ENCODE measurements at regions of chr16 and their contacts with region 1.

Region 1: DNA sequence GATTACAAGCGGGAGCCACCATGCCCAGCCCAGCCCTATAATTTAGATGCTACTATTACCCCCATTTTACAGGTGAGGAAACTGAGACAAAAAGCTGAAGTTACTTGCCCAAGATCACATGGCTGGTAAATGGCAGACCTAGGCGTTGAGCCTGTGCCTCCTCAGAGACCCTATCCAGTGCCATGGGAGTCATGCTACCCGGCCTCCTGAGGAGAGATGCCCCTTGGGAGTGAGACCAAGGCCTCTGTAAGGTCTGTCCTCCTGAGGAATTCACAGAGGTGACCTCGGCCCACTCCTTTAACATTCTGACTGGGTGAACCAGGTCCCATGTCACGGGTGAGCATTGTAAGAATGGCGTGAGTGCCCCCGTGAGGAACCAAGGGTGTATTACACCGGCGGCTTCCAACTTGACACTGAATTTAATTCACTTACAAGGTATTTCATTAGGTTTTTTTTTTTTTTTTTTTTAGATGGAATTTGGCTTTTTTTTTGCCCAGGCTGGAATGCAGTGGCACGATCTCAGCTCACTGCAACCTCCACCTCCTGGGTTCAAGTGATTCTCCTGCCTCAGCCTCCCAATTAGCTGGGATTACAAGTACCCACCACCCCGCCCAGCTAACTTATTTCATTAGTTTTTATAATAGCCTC is 95.7 kb downstream of the ABCC6 start:
- DNase-seq: peak; percentile 48
- ATAC-seq: peak; percentile 93
- H3K4me3 ChIP-seq: no peak overlapping the region
- H3K27ac ChIP-seq: no peak overlapping the region
- H3K4me1 ChIP-seq: 0 out of 4 replicates have a peak, but pooled peaks cover 0 to 3% of the 10 kb centered on the region in 2 experiments
- H3K27me3 ChIP-seq: no peaks in the 10 kb centered on the region
- CTCF ChIP-seq: peak; percentile 71 to 81 (median 71); a peak in 5 of 6 replicates
- POLR2A ChIP-seq: no peak
- RAD21 ChIP-seq: peak; percentile 87

Region 2: DNA sequence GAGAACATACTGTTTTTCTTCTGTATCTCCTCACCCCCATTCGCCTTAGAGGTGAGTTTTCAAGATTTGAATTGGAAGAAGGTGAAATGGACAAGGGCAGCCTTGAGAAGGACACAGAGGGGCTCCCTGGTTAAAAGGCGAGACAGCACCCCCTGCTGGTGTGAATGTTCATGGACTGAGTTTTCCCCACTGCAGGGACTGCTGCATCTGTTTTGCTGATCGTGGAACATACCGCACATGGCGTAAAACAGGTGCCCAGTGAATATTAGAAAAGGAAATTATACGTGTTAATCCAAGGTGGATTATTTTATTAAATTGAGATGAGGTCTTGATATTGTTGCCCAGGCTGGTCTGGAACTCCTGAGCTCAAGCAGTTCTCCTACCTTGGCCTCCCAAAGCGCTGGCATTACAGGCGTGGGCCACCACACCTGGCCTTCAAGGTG is 423.0 kb before region 1 on chr16:
- CTCF ChIA-PET with region 1: no interaction called
- POLR2A ChIA-PET with region 1: no interaction called
- RAD21 ChIA-PET with region 1: no interaction called
- intact Hi-C with region 1: loop called (anchors 10 kb)
- DNase-seq: peak; percentile 39
- ATAC-seq: peak; percentile 93
- H3K4me3 ChIP-seq: no peak overlapping the region
- H3K27ac ChIP-seq: no peak overlapping the region
- H3K4me1 ChIP-seq: no peaks in the 10 kb centered on the region
- H3K27me3 ChIP-seq: no peaks in the 10 kb centered on the region
- CTCF ChIP-seq: peak; percentile 64 to 90 (median 84); a peak in 5 of 6 replicates
- POLR2A ChIP-seq: no peak
- RAD21 ChIP-seq: peak; percentile 82

Region 3: GRCh38 chr16:15765880-15766279 is 361.7 kb before region 1 on chr16:
- CTCF ChIA-PET with region 1: no interaction called
- POLR2A ChIA-PET with region 1: no interaction called
- RAD21 ChIA-PET with region 1: interaction called in 1 of 2 experiments, 3 read pairs
- intact Hi-C with region 1: loop called (anchors 1 kb)
- DNase-seq: peak; percentile 55
- ATAC-seq: peak; percentile 99
- H3K4me3 ChIP-seq: no peak overlapping the region
- H3K27ac ChIP-seq: no peak overlapping the region
- H3K4me1 ChIP-seq: peaks cover 0 to 3% of the 10 kb centered on the region in 2 experiments; a peak in 2 of 4 replicates
- H3K27me3 ChIP-seq: no peaks in the 10 kb centered on the region
- CTCF ChIP-seq: peak; percentile 81 to 84 (median 84)
- POLR2A ChIP-seq: no peak
- RAD21 ChIP-seq: peak; percentile 88

Region 4: DNA sequence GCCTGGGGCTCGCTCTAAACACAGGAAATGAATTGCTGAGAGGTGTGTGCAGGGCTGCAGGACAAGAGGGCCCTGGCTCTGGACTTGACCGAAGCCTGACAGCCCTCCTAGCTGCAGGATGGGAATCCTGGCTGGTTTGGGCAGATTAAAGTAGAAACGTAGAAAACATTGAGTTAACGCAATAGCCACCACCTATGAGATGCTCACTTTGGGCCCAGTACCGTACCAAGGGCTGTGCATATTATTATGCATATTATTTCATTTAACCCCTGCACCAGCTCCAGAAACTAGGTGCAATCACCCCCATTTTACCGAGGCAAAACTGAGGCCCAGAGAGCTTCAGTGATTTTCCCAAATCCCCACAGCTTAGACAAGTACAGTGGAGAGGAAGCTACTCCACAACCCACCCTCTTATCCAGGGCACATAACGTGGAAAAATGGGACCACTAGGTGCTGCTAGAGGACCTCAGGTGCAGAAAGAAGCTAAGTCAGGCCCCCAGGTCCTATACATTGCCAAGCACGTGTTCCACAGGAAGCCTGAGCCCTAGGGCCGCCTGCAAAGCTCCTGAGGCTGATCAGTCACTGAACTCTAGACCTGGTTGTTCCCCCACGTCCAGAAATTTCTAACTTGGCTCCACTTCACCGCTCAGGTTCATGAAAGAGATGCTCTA is 349.9 kb before region 1 on chr16:
- CTCF ChIA-PET with region 1: interaction called, 13 read pairs
- POLR2A ChIA-PET with region 1: no interaction called
- RAD21 ChIA-PET with region 1: interaction called in 1 of 2 experiments, 4 read pairs
- intact Hi-C with region 1: no loop called
- DNase-seq: peak; percentile 60
- ATAC-seq: peak; percentile 94
- H3K4me3 ChIP-seq: no peak overlapping the region
- H3K27ac ChIP-seq: no peak overlapping the region
- H3K4me1 ChIP-seq: no peaks in the 10 kb centered on the region; a peak in 1 of 4 replicates
- H3K27me3 ChIP-seq: no peaks in the 10 kb centered on the region
- CTCF ChIP-seq: peak; percentile 58 to 74 (median 65)
- POLR2A ChIP-seq: no peak
- RAD21 ChIP-seq: peak; percentile 88

Region 5: GRCh38 chr16:15874745-15875314 is 252.8 kb before region 1 on chr16:
- CTCF ChIA-PET with region 1: interaction called, 19 read pairs
- POLR2A ChIA-PET with region 1: no interaction called
- RAD21 ChIA-PET with region 1: no interaction called
- intact Hi-C with region 1: loop called (anchors 1 kb)
- DNase-seq: peak; percentile 61
- ATAC-seq: peak; percentile 94
- H3K4me3 ChIP-seq: no peak overlapping the region
- H3K27ac ChIP-seq: no peak overlapping the region; the same call in 1 of the 2 replicates
- H3K4me1 ChIP-seq: peaks cover 5 to 8% of the 10 kb centered on the region in 2 experiments; a peak in 3 of 4 replicates
- H3K27me3 ChIP-seq: no peaks in the 10 kb centered on the region
- CTCF ChIP-seq: peak; percentile 48 to 89 (median 82); a peak in 5 of 6 replicates
- POLR2A ChIP-seq: no peak
- RAD21 ChIP-seq: peak; percentile 82

Region 6: DNA sequence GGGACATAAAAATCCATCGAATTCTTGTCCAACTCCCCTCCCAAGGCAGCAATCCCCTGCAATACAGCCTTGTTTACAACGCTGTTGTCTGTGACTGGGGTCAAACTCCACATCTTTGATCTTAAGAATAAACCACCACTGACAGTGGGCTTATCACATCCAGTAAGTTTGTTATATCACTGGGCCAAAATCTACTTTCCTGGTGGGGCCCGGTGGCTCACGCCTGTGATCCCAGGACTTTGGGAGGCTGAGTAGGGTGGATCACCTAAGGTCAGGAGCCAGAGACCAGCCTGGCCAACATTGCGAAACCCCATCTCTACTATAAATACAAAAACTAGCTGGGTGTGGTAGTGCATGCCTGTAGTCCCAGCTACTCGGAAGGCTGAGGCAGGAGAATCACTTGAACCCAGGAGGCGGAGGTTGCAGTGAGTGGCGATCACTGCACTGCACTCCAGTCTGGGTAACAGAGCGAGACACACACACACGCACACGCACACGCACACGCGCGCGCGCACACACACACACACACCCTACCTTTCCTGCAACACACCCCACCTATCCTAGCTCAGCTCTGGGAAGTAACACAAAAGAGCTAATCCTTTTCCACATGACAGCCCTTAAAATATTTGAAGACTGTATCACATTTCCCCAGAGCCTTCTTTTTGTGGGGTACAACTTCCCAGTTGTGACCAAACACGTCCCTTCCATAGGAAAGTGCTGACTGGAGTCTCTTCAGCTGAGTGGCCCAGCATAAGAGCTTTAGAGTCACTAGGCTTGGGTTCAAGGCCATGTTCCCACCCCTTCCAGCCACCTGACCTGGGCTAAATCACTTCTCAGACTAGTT is 199.1 kb before region 1 on chr16:
- CTCF ChIA-PET with region 1: no interaction called
- POLR2A ChIA-PET with region 1: no interaction called
- RAD21 ChIA-PET with region 1: no interaction called
- intact Hi-C with region 1: no loop called
- DNase-seq: no peak
- ATAC-seq: no peak
- H3K4me3 ChIP-seq: no peak overlapping the region
- H3K27ac ChIP-seq: no peak overlapping the region
- H3K4me1 ChIP-seq: peaks cover 0 to 4% of the 10 kb centered on the region in 2 experiments; a peak in 2 of 4 replicates
- H3K27me3 ChIP-seq: no peaks in the 10 kb centered on the region
- CTCF ChIP-seq: no peak
- POLR2A ChIP-seq: no peak
- RAD21 ChIP-seq: no peak

Region 7: GRCh38 chr16:16021988-16022682 is 105.5 kb before region 1 on chr16:
- CTCF ChIA-PET with region 1: no interaction called
- POLR2A ChIA-PET with region 1: no interaction called
- RAD21 ChIA-PET with region 1: no interaction called
- intact Hi-C with region 1: no loop called
- DNase-seq: peak; percentile 81
- ATAC-seq: peak; percentile 95
- H3K4me3 ChIP-seq: peak overlapping the region in 1 of 2 experiments; percentile 19; a peak in 3 of 4 replicates
- H3K27ac ChIP-seq: peak overlapping the region; percentile 75
- H3K4me1 ChIP-seq: peaks cover 48 to 80% of the 10 kb centered on the region in 2 experiments
- H3K27me3 ChIP-seq: no peaks in the 10 kb centered on the region
- CTCF ChIP-seq: no peak
- POLR2A ChIP-seq: no peak
- RAD21 ChIP-seq: 0 out of 2 replicates have a peak, but pooled peaks have one; percentile 49